PC-3 (cell line): ENCODE measurements at regions of chr11 and their contacts with region 1.

Region 1: GRCh38 chr11:62726915-62727763 is at the start of gene HNRNPUL2:
- DNase-seq: peak; percentile 100
- ATAC-seq: peak; percentile 82
- H3K4me3 ChIP-seq: peak within 1 kb of the TSS; percentile 91
- H3K27ac ChIP-seq: peak within 1 kb of the TSS; percentile 90
- H3K4me1 ChIP-seq: peaks cover 9% of the 10 kb centered on the region
- H3K27me3 ChIP-seq: no peaks in the 10 kb centered on the region
- CTCF ChIP-seq: no peak
- total RNA-seq, gene HNRNPUL2: 15.5 and 25.4 TPM in 2 replicates

Region 2: GRCh38 chr11:62694455-62695167 is 32.5 kb before region 1 on chr11:
- CTCF ChIA-PET with region 1: no interaction called
- POLR2A ChIA-PET with region 1: no interaction called
- intact Hi-C with region 1: no loop called
- DNase-seq: peak; percentile 80
- ATAC-seq: peak; percentile 95
- H3K4me3 ChIP-seq: no peak overlapping the region
- H3K27ac ChIP-seq: no peak overlapping the region
- H3K4me1 ChIP-seq: no peaks in the 10 kb centered on the region
- H3K27me3 ChIP-seq: no peaks in the 10 kb centered on the region
- CTCF ChIP-seq: peak; percentile 95

Region 3: GRCh38 chr11:62705880-62706849 is 21.0 kb before region 1 on chr11:
- CTCF ChIA-PET with region 1: interaction called, 3 read pairs
- POLR2A ChIA-PET with region 1: no interaction called
- intact Hi-C with region 1: loop called (anchors 2 kb)
- DNase-seq: peak; percentile 97
- ATAC-seq: peak; percentile 89
- H3K4me3 ChIP-seq: peak overlapping the region; percentile 87
- H3K27ac ChIP-seq: peak overlapping the region; percentile 54
- H3K4me1 ChIP-seq: peaks cover 17% of the 10 kb centered on the region
- H3K27me3 ChIP-seq: no peaks in the 10 kb centered on the region
- CTCF ChIP-seq: no peak

Region 4: GRCh38 chr11:62771144-62772021 is 44.2 kb after region 1 on chr11 and contains the start of gene TAF6L:
- CTCF ChIA-PET with region 1: interaction called, 4 read pairs
- POLR2A ChIA-PET with region 1: interaction called, 5 read pairs
- intact Hi-C with region 1: loop called (anchors 2 kb)
- DNase-seq: peak; percentile 99
- ATAC-seq: peak; percentile 92
- H3K4me3 ChIP-seq: peak within 1 kb of the TSS; percentile 74
- H3K27ac ChIP-seq: peak within 1 kb of the TSS; percentile 76
- H3K4me1 ChIP-seq: peaks cover 13% of the 10 kb centered on the region
- H3K27me3 ChIP-seq: no peaks in the 10 kb centered on the region
- CTCF ChIP-seq: no peak
- total RNA-seq, gene TAF6L: 40.2 and 43.9 TPM in 2 replicates

Region 5: DNA sequence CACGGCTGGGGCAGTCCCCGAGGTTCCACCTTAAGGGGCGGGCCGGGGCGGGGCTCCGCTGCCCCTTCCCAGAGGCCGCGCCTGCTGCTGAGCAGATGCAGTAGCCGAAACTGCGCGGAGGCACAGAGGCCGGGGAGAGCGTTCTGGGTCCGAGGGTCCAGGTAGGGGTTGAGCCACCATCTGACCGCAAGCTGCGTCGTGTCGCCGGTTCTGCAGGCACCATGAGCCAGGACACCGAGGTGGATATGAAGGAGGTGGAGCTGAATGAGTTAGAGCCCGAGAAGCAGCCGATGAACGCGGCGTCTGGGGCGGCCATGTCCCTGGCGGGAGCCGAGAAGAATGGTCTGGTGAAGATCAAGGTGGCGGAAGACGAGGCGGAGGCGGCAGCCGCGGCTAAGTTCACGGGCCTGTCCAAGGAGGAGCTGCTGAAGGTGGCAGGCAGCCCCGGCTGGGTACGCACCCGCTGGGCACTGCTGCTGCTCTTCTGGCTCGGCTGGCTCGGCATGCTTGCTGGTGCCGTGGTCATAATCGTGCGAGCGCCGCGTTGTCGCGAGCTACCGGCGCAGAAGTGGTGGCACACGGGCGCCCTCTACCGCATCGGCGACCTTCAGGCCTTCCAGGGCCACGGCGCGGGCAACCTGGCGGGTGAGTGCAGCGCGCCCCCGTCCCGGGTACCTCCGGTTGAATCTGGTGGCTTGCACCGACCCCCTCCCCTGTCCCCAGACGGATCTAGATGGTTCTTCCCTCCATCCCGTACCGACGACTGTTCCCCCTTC is 153.9 kb after region 1 on chr11 and contains the start of gene SLC3A2:
- CTCF ChIA-PET with region 1: interaction called, 3 read pairs
- POLR2A ChIA-PET with region 1: no interaction called
- intact Hi-C with region 1: loop called (anchors 5 kb)
- DNase-seq: peak; percentile 93
- ATAC-seq: peak; percentile 82
- H3K4me3 ChIP-seq: peak within 1 kb of the TSS; percentile 85
- H3K27ac ChIP-seq: peak within 1 kb of the TSS; percentile 93
- H3K4me1 ChIP-seq: peaks cover 38% of the 10 kb centered on the region
- H3K27me3 ChIP-seq: no peaks in the 10 kb centered on the region
- CTCF ChIP-seq: peak; percentile 81
- total RNA-seq, gene SLC3A2: 243 and 304 TPM in 2 replicates